ENCODE measurements at regions of chr17 and their contacts with region 1.

Region 1: GRCh38 chr17:7561028-7561575 is 617 bp upstream of the SENP3 start:
- DNase-seq: peak; percentile 61
- H3K4me3 ChIP-seq: peak overlapping the region; percentile 82
- H3K27ac ChIP-seq: peak overlapping the region; percentile 83
- H3K27me3 ChIP-seq: no peaks in the 10 kb centered on the region
- CTCF ChIP-seq: peak; percentile 83

Region 2: GRCh38 chr17:7329374-7329996 is 231.6 kb before region 1 on chr17:
- CTCF ChIA-PET with region 1: interaction called, 13 read pairs
- POLR2A ChIA-PET with region 1: no interaction called
- DNase-seq: peak; percentile 99
- H3K4me3 ChIP-seq: peak overlapping the region; percentile 97
- H3K27ac ChIP-seq: peak overlapping the region; percentile 91
- H3K27me3 ChIP-seq: peaks cover 4% of the 10 kb centered on the region
- CTCF ChIP-seq: no peak

Region 3: GRCh38 chr17:7361906-7362305 is 199.2 kb before region 1 on chr17:
- CTCF ChIA-PET with region 1: interaction called, 10 read pairs
- POLR2A ChIA-PET with region 1: no interaction called
- DNase-seq: no peak
- H3K4me3 ChIP-seq: no peak overlapping the region
- H3K27ac ChIP-seq: no peak overlapping the region
- H3K27me3 ChIP-seq: no peaks in the 10 kb centered on the region
- CTCF ChIP-seq: no peak

Region 4: DNA sequence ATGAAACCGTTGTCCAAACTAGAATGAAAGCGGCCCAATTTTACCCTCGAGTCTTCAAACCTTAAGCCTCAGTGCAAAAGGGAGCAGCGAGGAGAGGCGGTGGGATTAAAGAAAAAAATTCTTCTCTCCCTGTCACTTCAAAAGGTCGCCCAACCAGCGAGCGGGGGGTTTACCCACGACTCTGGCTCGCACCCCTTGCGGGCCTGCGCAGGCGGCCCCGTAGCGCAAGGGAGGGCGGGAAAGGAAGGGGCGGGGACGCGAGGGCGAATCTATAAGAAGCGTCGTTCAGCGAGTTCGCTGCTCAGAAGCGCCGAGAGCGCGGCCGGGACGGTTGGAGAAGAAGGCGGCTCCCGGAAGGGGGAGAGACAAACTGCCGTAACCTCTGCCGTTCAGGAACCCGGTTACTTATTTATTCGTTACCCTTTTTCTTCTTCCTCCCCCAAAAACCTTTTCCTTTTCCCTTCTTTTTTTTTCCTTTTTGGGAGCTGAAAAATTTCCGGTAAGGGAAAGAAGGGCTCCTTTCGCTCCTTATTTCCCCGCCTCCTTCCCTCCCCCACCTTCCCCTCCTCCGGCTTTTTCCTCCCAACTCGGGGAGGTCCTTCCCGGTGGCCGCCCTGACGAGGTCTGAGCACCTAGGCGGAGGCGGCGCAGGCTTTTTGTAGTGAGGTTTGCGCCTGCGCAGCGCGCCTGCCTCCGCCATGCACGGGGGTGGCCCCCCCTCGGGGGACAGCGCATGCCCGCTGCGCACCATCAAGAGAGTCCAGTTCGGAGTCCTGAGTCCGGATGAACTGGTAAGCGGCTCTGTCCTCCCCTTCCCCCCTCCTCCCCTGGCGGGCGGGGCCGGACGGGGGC is 76.8 kb before region 1 on chr17 and contains the start of gene POLR2A:
- CTCF ChIA-PET with region 1: interaction called, 22 read pairs
- POLR2A ChIA-PET with region 1: interaction called, 9 read pairs
- DNase-seq: peak; percentile 96
- H3K4me3 ChIP-seq: peak within 1 kb of the TSS; percentile 92
- H3K27ac ChIP-seq: peak within 1 kb of the TSS; percentile 100
- H3K27me3 ChIP-seq: no peaks in the 10 kb centered on the region
- CTCF ChIP-seq: no peak
- polyA plus RNA-seq, gene POLR2A: 18.4 and 35.0 TPM in 2 replicates

Region 5: DNA sequence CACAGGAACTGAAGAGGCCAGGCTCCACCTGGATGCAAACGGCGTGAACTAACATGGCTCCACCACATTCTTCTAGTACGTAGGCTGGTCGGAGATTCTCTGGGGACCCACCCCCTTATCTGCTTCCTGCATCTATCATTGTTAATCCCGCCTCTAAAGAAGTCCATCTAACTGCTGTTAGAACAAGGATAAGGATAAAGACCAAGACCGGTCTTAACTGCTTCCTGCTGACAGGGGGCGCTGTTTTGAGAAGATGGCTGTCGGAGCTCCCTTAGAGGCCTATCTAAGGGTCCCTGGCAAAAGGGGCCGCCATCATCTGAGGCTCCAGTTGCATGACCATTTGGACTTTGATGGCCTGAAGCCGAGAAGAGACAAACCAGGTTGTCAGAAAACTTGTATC is 38.1 kb before region 1 on chr17:
- CTCF ChIA-PET with region 1: interaction called, 116 read pairs
- POLR2A ChIA-PET with region 1: no interaction called
- DNase-seq: no peak
- H3K4me3 ChIP-seq: no peak overlapping the region
- H3K27ac ChIP-seq: no peak overlapping the region
- H3K27me3 ChIP-seq: no peaks in the 10 kb centered on the region
- CTCF ChIP-seq: peak; percentile 42

Region 6: DNA sequence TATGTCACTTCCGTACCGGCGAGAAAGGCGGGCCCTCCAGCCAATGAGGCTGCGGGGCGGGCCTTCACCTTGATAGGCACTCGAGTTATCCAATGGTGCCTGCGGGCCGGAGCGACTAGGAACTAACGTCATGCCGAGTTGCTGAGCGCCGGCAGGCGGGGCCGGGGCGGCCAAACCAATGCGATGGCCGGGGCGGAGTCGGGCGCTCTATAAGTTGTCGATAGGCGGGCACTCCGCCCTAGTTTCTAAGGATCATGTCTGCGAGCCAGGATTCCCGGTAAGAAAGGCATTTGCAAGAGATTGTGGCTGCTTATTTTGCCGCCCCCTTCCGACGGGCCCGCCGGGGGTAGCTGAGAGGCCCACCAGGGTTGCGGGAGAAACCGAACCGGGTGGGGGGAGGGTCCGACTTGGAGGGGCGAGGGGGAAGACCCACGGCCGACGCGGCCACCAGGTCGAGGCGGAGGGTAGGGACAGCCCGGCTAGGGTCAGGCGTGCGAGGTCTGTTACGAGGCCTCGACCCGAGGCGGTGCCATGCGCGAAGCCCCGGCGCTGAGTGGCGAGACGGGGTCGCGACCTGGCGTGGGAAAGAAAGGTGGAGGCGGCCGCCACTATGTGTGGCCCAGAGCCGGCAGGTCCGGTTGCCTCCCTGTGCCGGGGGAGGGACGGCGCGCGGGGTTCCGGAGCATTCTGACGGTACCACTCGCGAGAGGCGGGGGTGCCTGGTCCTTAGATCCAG is 11.7 kb after region 1 on chr17:
- CTCF ChIA-PET with region 1: interaction called, 24 read pairs
- POLR2A ChIA-PET with region 1: interaction called, 8 read pairs
- DNase-seq: peak; percentile 98
- H3K4me3 ChIP-seq: peak overlapping the region; percentile 98
- H3K27ac ChIP-seq: peak overlapping the region; percentile 96
- H3K27me3 ChIP-seq: no peaks in the 10 kb centered on the region
- CTCF ChIP-seq: peak; percentile 6; the same call in 1 of the 2 replicates

Region 7: DNA sequence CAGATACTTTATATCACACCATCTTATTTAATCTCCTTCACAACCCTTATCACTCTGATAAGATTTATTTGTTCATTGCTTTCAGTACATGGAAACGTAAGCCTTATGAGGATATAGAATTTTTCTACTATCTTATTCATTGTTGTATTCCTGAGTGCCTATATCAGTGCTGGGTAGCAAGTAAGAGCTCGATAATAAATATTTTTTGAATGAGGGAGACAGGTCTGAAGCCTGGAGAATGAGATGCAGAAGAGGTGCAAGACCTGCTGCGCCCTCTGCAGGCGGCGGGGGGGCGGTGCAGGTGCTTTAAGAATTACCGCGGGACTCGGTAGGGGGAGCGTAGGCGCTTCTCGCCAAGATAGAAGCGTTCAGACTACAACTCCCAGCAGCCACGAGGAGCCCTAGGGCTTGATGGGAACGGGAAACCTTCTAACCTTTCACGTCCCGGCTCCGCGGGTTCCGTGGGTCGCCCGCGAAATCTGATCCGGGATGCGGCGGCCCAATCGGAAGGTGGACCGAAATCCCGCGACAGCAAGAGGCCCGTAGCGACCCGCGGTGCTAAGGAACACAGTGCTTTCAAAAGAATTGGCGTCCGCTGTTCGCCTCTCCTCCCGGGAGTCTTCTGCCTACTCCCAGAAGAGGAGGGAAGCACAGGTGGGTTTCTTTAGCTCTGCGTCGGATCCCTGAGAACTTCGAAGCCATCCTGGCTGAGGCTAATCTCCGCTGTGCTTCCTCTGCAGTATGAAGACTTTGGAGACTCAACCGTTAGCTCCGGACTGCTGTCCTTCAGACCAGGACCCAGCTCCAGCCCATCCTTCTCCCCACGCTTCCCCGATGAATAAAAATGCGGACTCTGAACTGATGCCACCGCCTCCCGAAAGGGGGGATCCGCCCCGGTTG is 127.1 kb after region 1 on chr17 and contains the start of gene WRAP53:
- CTCF ChIA-PET with region 1: interaction called, 13 read pairs
- POLR2A ChIA-PET with region 1: no interaction called
- DNase-seq: peak; percentile 98
- H3K4me3 ChIP-seq: peak within 1 kb of the TSS; percentile 97
- H3K27ac ChIP-seq: peak within 1 kb of the TSS; percentile 99
- H3K27me3 ChIP-seq: no peaks in the 10 kb centered on the region
- CTCF ChIP-seq: peak; percentile 97
- polyA plus RNA-seq, gene WRAP53: 4.1 and 4.5 TPM in 2 replicates